Posterior cingulate gyrus (tissue), 11 donors: ENCODE measurements at regions of chr2 and their contacts with region 1.

Region 1: DNA sequence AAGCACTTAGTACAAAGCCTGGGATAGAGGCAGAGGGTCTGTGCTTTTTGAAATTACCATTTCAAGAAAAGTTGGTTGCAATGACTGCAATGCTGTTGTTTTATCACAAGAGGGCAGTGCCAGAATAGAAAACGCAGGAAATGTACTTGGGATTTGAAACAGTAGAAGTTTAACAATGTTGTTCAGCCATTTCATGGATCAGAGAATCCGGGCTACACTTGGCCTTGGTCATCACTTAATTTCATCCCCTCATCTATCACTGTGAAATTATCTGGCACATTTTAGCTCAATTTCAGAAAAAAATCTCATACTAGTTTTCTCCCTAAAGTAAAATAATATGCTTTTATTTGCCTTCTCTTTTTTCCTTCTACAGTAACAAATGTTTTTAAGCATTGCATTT is 70.8 kb downstream of the RAPGEF4 start:
- DNase-seq: no peak

Region 2: GRCh38 chr2:172743143-172743542 is 63.4 kb before region 1 on chr2:
- intact Hi-C with region 1: no loop called
- DNase-seq: peak in 1 of 10 donors; percentile 75

Region 3: GRCh38 chr2:172864182-172864581 is 57.7 kb after region 1 on chr2:
- intact Hi-C with region 1: loop called (anchors 5 kb)
- DNase-seq: peak in 7 of 10 donors; percentile 35 to 89 (median 64)

Region 4: DNA sequence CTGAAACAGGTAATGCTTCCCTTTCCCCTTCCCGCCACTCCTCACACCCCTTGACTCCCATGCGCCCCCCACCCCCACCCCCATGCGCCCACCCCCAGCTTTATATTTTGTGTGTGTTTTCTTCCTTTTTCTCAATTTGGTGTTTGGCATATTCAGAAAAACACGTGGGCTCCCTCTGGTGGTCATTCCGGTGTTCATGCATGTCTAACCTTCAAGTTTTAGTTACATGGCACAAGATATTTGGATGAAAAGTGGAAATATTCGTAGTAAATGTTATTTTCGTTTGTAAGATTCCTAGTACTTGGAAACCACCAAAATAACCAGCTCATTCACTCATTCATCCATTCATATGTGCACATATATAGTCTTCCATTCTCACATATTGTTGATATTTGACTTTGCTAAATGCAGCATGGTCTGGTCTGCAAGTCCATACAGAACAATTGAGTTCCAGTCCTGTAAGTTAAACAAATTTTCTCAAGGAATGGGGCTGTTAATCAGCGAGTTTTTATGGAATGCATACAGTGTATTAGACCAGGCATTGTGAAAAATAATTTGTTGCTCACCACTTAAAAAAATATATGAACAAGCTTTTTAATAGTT is 125.5 kb after region 1 on chr2:
- intact Hi-C with region 1: loop called (anchors 1 kb)
- DNase-seq: peak in 7 of 10 donors; percentile 39 to 90 (median 72)

Region 5: DNA sequence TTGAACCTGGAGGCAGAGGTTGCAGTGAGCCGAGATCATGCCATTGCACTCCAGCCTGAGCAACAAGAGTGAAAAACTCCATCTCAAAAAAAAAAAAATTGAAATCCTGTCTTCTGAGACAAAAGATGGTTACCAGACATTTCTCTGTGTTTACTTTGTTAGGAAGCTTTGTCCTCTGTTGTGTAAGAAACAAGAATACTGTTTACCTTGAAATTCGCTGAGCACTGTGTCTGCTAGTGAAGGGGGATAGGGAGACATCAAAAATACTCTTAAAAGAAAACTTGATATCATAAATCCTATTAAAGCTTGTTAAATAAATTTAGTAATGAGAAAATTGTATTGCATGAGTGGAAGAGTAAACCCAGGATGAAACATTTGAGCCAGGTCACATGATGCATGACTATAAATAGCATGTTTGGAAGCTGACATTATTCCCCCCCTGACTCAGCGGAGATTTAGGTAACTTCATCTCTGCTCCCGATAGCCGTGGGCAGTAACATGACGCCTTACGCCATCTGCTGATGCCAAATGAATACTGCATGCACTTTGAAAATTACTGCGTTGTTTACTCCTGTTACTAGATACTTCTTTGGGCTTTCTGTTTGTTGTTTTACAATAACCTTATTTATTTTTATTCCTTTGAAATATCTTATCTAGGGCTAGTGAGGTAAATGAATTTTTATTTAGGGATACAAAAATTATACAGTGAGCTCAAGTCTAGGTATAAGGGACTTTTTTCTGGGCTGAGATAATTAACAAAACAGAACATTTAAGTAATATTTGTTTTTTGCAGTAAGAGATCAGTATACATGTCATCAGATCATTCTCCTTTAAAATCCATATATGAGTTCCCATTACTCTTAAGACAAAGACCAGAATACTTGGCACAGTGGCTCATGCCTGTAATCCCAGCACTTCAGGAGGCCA is 404.0 kb after region 1 on chr2:
- intact Hi-C with region 1: loop called (anchors 2 kb)
- DNase-seq: peak in 5 of 10 donors; percentile 30 to 90 (median 60)